MCF 10A (cell line): ENCODE measurements at regions of chr2 and their contacts with region 1.

Region 1: DNA sequence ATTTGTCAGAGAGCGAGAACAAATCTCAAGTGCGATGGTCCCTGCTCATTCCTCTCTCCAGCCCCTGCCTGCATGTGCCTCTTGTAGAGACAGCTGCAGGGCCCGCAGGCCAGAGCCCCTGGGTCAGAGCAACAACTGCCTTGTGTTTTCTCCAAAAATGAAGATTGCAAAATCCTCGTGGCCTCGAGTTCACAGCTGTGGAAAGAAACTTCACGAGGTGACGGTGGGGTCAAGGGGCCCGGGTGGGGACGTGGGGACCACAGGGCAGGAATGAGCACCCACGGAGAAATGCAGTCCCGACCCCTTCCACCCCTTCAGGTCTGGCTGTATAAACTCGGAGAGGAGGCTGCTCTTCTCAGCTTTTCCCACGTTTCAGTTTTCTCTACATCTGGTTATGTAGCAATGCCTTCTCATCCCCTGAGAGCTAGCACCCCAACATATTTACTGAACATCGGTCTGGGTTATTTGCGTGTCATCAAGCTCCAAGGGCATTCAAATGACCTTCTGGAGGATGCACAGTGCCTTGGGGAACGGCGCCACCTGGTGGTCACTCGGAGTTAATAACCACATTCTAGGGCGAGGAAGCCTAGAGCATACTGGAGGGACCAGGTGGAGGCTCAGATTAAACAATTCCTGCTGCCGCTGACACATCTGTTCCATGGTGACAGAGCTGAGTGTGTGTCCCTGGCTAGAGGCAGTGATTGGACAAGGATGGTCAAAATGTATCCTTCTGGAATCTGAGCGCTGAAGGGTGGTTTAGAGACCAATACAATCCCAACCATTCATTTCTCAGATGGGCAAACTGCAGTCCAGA is 91.4 kb upstream of the CYRIA start:
- DNase-seq: peak; percentile 66
- H3K4me3 Mint-ChIP-seq: no peak overlapping the region
- H3K27ac Mint-ChIP-seq: no peak overlapping the region
- H3K4me1 Mint-ChIP-seq: no peaks in the 10 kb centered on the region
- H3K27me3 Mint-ChIP-seq: peaks cover 12% of the 10 kb centered on the region
- CTCF ChIP-seq: peak; percentile 89

Region 2: DNA sequence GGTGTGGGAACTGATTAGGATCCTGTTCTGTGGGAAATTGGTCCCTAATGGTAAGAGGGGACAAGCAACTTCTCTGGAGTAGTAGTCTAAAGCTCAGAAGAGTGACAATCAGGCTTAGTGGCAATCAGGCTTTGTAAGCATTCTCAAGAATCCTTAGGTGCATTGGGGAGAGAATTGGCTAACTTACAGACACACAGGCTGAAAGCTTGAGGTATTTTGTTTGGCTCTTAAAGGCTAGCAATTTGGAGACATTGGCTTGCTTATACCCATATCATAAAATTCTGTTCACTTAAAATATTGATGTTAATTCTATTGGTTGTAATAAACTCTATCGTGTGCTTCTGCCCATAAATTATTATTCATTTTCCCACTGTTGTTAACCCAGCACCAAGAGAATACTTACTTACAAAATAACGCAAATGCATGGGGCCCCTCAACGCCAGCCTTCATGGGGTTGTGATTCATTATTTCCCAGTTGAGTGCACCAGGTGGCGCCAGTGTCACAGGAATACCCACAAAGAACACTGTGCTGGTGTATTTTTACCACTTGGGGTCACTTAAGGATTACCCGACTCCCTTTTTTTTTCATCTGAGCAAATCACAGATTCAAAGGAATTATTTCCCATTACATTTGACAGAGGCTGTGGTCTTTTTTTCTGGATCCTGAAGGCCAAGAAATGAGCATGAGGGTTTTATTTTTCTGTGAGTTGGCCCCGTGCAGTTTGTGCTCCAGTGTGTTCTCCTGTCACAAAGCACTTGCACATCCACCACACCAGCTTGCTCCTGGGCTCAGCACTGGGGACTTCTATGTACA is 1119.9 kb before region 1 on chr2:
- CTCF ChIA-PET with region 1: interaction called, 4 read pairs
- POLR2A ChIA-PET with region 1: no interaction called
- intact Hi-C with region 1: loop called (anchors 10 kb)
- DNase-seq: peak; percentile 70
- H3K4me3 Mint-ChIP-seq: no peak overlapping the region
- H3K27ac Mint-ChIP-seq: no peak overlapping the region
- H3K4me1 Mint-ChIP-seq: peaks cover 6% of the 10 kb centered on the region
- H3K27me3 Mint-ChIP-seq: no peaks in the 10 kb centered on the region
- CTCF ChIP-seq: peak; percentile 86

Region 3: GRCh38 chr2:16553226-16553625 is 203.8 kb before region 1 on chr2:
- CTCF ChIA-PET with region 1: interaction called, 4 read pairs
- POLR2A ChIA-PET with region 1: no interaction called
- intact Hi-C with region 1: loop called (anchors 1 kb)
- DNase-seq: peak; percentile 71
- H3K4me3 Mint-ChIP-seq: no peak overlapping the region
- H3K27ac Mint-ChIP-seq: no peak overlapping the region
- H3K4me1 Mint-ChIP-seq: no peaks in the 10 kb centered on the region
- H3K27me3 Mint-ChIP-seq: peaks cover 8% of the 10 kb centered on the region
- CTCF ChIP-seq: no peak

Region 4: GRCh38 chr2:16617282-16618261 is 139.5 kb before region 1 on chr2:
- CTCF ChIA-PET with region 1: interaction called, 263 read pairs
- POLR2A ChIA-PET with region 1: interaction called, 15 read pairs
- intact Hi-C with region 1: loop called (anchors 1 kb)
- DNase-seq: peak; percentile 51
- H3K4me3 Mint-ChIP-seq: no peak overlapping the region
- H3K27ac Mint-ChIP-seq: no peak overlapping the region
- H3K4me1 Mint-ChIP-seq: no peaks in the 10 kb centered on the region
- H3K27me3 Mint-ChIP-seq: peaks cover 14% of the 10 kb centered on the region
- CTCF ChIP-seq: peak; percentile 56

Region 5: GRCh38 chr2:16635791-16636699 is 121.0 kb before region 1 on chr2:
- CTCF ChIA-PET with region 1: interaction called, 16 read pairs
- POLR2A ChIA-PET with region 1: no interaction called
- intact Hi-C with region 1: no loop called
- DNase-seq: no peak
- H3K4me3 Mint-ChIP-seq: no peak overlapping the region
- H3K27ac Mint-ChIP-seq: no peak overlapping the region
- H3K4me1 Mint-ChIP-seq: peaks cover 8% of the 10 kb centered on the region
- H3K27me3 Mint-ChIP-seq: no peaks in the 10 kb centered on the region
- CTCF ChIP-seq: no peak

Region 6: DNA sequence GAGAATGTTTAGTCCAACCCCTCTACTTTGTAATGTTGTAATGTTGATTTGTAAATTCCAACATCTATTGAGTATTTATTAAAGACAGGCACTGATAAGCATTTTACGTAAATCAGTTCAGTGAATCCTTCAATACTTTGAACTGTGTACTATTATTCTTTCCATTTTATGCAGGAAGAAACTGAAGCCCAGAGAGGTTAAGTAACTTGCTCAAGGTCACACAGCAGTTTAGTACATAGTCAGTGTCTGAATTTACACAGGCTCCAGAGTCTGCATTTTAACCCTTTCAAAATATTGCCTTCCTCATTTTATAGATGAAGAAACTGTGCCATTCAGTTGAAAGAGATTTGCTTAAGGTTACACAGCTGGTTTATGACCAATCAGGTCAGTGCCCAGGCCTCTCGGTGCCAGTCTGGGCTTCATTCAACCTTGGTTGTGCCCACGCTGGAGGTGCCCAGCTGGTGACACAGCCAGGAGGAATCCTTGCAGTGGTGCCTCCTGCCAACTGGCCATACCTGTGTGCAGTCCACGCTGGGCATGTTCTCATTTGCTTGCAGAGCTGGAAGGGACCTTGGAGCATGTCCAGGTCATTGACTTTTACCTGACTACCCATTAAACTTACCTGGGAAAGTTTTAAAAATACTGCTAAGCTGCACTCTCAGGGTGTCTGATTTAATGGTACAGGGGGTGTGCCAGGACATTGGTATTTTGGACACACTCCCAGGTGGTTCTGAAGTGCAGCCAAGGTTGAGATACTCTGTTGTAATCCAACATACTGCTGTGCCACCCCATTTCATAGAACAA is 17.1 kb before region 1 on chr2:
- CTCF ChIA-PET with region 1: interaction called, 44 read pairs
- POLR2A ChIA-PET with region 1: no interaction called
- intact Hi-C with region 1: no loop called
- DNase-seq: peak; percentile 91
- H3K4me3 Mint-ChIP-seq: no peak overlapping the region
- H3K27ac Mint-ChIP-seq: peak overlapping the region; percentile 37
- H3K4me1 Mint-ChIP-seq: peaks cover 22% of the 10 kb centered on the region
- H3K27me3 Mint-ChIP-seq: no peaks in the 10 kb centered on the region
- CTCF ChIP-seq: no peak

Region 7: DNA sequence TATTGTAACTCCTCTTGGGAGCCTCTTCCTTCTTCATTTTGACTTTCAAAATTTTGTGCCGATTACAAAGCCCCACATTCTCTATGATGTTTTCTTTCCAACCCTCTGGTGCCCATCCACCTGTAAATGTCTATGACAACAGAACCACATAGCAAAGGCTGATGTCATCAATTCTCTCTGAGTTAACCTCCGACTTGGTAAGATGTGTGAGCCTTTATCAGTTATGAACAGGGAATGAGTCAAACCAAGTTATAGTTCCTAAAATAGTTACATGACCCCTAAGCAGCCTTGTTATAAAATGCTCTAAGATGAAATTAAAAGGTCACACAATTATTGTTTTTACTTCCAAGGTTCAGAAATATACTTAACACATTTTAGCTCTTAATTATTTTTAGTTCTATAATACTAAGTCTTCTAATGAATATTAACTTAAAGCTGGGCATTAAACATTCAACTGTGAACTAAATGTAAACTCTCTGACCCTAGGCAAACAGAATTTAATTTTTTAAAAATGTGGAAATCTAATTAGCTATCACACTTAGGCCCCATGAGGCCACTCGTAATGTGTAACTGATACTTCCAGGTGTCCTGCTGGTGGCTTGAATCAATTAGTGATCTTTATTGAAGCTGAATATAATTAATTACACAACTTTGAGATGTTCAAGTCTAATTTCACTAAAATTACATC is 10.9 kb after region 1 on chr2:
- CTCF ChIA-PET with region 1: interaction called, 30 read pairs
- POLR2A ChIA-PET with region 1: interaction called, 3 read pairs
- intact Hi-C with region 1: no loop called
- DNase-seq: no peak
- H3K4me3 Mint-ChIP-seq: no peak overlapping the region
- H3K27ac Mint-ChIP-seq: no peak overlapping the region
- H3K4me1 Mint-ChIP-seq: peaks cover 9% of the 10 kb centered on the region
- H3K27me3 Mint-ChIP-seq: peaks cover 21% of the 10 kb centered on the region
- CTCF ChIP-seq: no peak

Region 8: DNA sequence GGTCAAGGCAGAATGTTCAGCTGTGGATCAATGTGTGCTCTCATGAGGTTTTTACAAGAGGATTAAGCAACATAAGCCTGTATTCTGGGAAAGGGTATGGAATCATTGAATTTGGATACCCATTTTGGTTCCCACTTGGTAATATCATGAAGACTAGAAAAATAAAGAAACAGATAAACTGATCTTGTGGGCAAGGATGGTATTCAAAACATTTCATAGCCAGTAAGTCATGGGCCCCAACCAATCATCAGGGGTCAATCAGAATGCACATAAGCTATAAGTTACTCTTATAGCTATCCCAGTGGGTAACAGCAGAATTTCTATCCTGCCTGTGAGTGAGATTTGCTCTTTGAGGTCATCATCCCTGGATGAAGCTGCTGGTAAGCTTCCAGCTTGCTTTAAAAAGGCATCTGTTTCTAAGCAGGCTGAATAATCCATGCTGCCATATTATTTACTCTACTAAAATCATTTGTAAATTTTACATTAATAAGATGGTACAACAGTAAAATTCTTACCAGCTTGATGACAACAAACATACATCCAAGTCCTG is 470.0 kb after region 1 on chr2:
- CTCF ChIA-PET with region 1: no interaction called
- POLR2A ChIA-PET with region 1: no interaction called
- intact Hi-C with region 1: no loop called
- DNase-seq: no peak
- H3K4me3 Mint-ChIP-seq: no peak overlapping the region
- H3K27ac Mint-ChIP-seq: no peak overlapping the region
- H3K4me1 Mint-ChIP-seq: no peaks in the 10 kb centered on the region
- H3K27me3 Mint-ChIP-seq: no peaks in the 10 kb centered on the region
- CTCF ChIP-seq: no peak

Region 9: DNA sequence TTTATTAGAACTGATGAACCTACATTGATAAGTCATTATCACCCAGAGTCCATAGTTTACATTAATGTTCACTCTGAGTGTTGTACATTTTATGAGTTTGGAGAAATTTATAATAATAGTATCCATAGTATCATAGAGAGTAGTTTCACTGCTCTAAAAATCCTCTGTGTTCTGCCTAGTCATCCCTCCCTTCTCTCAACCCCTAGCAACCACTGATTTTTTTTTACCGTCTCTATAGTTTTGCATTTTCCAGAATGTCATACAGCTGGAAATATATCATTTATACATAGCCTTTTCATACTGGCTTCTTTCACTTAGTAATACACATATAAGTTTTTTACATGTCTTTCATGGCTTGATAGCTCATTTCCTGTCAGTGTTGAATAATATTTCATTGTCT is 530.1 kb after region 1 on chr2:
- CTCF ChIA-PET with region 1: no interaction called
- POLR2A ChIA-PET with region 1: no interaction called
- intact Hi-C with region 1: no loop called
- DNase-seq: no peak
- H3K4me3 Mint-ChIP-seq: no peak overlapping the region
- H3K27ac Mint-ChIP-seq: no peak overlapping the region
- H3K4me1 Mint-ChIP-seq: no peaks in the 10 kb centered on the region
- H3K27me3 Mint-ChIP-seq: no peaks in the 10 kb centered on the region
- CTCF ChIP-seq: no peak